Transverse colon (tissue), 4 donors: ENCODE measurements at regions of chr7 and their contacts with region 1.

Region 1: GRCh38 chr7:98106647-98107445 is at the start of gene LMTK2:
- DNase-seq: peak; percentile 97
- H3K4me3 ChIP-seq: peak within 1 kb of the TSS; percentile 74 to 98 (median 88)
- H3K27ac ChIP-seq: peak within 1 kb of the TSS; percentile 87 to 95 (median 90)
- H3K4me1 ChIP-seq: peaks cover 8 to 45% (median 36%) of the 10 kb centered on the region in 4 donors
- H3K27me3 ChIP-seq: no peaks in the 10 kb centered on the region
- CTCF ChIP-seq: peak; percentile 94 to 99 (median 96)
- EP300 ChIP-seq: no peak
- POLR2A ChIP-seq: peak; percentile 96
- total RNA-seq, gene LMTK2: 51.6 to 106 (median 62.2) TPM

Region 2: DNA sequence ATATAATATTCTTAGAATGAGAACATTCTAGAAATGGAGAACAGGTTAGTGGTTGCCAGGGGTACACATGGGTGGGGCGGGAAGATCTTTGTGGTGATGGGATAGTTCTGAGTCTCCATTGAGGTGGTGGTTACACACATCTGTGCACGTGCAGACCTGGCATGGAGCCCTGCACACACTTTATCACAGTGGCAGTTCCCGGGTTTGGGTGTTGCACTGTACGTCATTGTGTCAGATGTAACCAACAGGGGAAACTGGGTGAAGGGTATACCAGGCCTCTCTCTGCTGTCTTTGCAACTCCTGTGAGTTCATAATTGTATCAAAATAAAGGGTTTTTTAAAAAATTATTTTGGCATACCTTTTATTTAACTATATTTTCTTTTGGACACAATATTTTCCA is 50.9 kb after region 1 on chr7:
- in situ Hi-C with region 1: loop called in 2 of 4 experiments (anchors 10 kb)
- intact Hi-C with region 1: no loop called
- DNase-seq: peak; percentile 16
- H3K4me3 ChIP-seq: no peak overlapping the region
- H3K27ac ChIP-seq: no peak overlapping the region
- H3K4me1 ChIP-seq: peaks cover 0 to 2% (median under 1%) of the 10 kb centered on the region in 4 donors
- H3K27me3 ChIP-seq: no peaks in the 10 kb centered on the region
- CTCF ChIP-seq: no peak
- EP300 ChIP-seq: no peak
- POLR2A ChIP-seq: no peak

Region 3: GRCh38 chr7:98168181-98168905 is 61.5 kb after region 1 on chr7:
- in situ Hi-C with region 1: no loop called
- intact Hi-C with region 1: loop called (anchors 5 kb)
- DNase-seq: peak; percentile 76
- H3K4me3 ChIP-seq: no peak overlapping the region
- H3K27ac ChIP-seq: no peak overlapping the region
- H3K4me1 ChIP-seq: peaks cover 0 to 31% (median 11%) of the 10 kb centered on the region in 4 donors
- H3K27me3 ChIP-seq: no peaks in the 10 kb centered on the region
- CTCF ChIP-seq: peak; percentile 82 to 88 (median 87)
- EP300 ChIP-seq: no peak
- POLR2A ChIP-seq: no peak

Region 4: GRCh38 chr7:98234429-98235147 is 127.7 kb after region 1 on chr7:
- in situ Hi-C with region 1: no loop called
- intact Hi-C with region 1: no loop called
- DNase-seq: no peak
- H3K4me3 ChIP-seq: no peak overlapping the region
- H3K27ac ChIP-seq: no peak overlapping the region
- H3K4me1 ChIP-seq: no peaks in the 10 kb centered on the region
- H3K27me3 ChIP-seq: no peaks in the 10 kb centered on the region
- CTCF ChIP-seq: no peak
- EP300 ChIP-seq: no peak
- POLR2A ChIP-seq: no peak